Activated CD4-positive, alpha-beta T cell treated with anti-CD3 and anti-CD28 coated beads for 36 hours (primary cell): ENCODE measurements at regions of chr7 and their contacts with region 1.

Region 1: GRCh38 chr7:51123322-51124029 is 193.1 kb downstream of the COBL start:
- DNase-seq: peak; percentile 92
- ATAC-seq: peak; percentile 99
- H3K4me3 Mint-ChIP-seq: peak overlapping the region; percentile 10
- H3K27ac Mint-ChIP-seq: peak overlapping the region; percentile 88
- H3K4me1 Mint-ChIP-seq: peaks cover 40% of the 10 kb centered on the region
- H3K27me3 Mint-ChIP-seq: no peaks in the 10 kb centered on the region

Region 2: DNA sequence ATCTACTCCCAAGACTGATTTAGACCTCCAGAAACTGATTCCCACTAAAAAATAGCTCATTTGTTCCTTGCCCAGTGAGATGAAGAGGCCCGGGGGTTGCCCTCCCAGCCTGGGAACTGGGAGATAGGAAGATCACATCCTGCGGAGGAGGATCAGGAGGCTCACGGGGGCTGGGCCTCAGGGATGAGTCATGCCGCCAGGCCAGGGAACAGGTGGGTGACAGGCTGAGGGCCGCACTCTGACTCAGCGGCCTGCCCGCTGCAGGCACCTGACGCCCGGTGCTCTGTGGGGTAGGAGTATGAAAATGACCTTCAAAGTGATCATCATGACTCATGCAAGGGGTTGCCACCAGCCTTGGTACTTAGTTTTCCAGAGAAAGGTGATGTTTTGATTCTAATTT is 925.9 kb before region 1 on chr7:
- CTCF ChIA-PET with region 1: no interaction called
- POLR2A ChIA-PET with region 1: no interaction called
- intact Hi-C with region 1: loop called in 1 of 2 experiments (anchors 2 kb)
- DNase-seq: peak; percentile 91
- ATAC-seq: peak; percentile 96
- H3K4me3 Mint-ChIP-seq: peak overlapping the region; percentile 9
- H3K27ac Mint-ChIP-seq: peak overlapping the region; percentile 76
- H3K4me1 Mint-ChIP-seq: peaks cover 43% of the 10 kb centered on the region
- H3K27me3 Mint-ChIP-seq: no peaks in the 10 kb centered on the region

Region 3: DNA sequence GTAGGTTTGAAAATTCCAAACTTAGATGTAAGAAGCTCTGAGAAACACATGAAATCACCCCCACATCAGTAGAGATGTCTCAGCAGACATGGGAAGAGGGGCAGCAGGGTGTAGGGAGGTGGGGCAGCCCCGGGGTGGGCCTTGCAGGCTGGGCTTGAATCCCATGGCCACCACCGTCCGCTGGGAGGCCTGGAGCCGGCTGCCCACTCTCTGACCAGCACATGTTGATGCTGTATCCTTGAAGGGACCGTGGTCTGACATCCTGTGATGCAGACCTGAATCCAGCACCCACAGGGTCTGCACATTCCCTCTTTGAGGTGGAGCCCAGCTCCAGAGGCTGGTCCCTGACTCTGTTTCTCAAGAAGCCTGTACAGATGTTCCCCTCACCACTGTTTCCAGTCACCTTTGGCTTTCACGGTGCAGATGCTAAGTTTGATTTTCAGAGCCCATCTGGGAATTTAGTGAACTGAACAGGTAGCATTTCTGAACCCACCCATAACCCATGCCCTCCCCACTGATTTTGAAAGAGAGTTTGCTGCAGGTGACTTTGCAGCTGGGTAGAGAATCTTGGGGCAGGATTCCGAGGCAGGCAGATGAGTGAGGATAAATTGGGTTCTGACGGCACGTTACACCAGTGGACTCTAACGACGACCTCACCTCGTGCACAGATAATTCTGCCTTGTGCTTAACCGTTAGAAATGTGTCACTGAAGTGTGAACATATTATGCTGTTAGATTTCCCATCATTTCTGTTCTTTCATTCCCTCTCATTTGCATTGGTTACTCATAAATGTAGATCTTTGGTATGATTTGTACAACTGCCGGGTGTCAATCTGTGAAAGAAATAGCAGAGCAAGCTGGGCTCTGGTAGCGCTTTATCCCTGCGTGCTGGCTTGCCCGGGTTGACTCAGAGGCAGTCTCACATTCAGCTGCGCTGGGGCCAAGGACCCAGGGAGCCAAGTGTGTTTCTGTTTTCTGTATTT is 773.2 kb before region 1 on chr7:
- CTCF ChIA-PET with region 1: no interaction called
- POLR2A ChIA-PET with region 1: no interaction called
- intact Hi-C with region 1: loop called in 1 of 2 experiments (anchors 5 kb)
- DNase-seq: peak; percentile 93
- ATAC-seq: peak; percentile 71
- H3K4me3 Mint-ChIP-seq: peak overlapping the region; percentile 61
- H3K27ac Mint-ChIP-seq: peak overlapping the region; percentile 100
- H3K4me1 Mint-ChIP-seq: peaks cover 97% of the 10 kb centered on the region
- H3K27me3 Mint-ChIP-seq: no peaks in the 10 kb centered on the region

Region 4: DNA sequence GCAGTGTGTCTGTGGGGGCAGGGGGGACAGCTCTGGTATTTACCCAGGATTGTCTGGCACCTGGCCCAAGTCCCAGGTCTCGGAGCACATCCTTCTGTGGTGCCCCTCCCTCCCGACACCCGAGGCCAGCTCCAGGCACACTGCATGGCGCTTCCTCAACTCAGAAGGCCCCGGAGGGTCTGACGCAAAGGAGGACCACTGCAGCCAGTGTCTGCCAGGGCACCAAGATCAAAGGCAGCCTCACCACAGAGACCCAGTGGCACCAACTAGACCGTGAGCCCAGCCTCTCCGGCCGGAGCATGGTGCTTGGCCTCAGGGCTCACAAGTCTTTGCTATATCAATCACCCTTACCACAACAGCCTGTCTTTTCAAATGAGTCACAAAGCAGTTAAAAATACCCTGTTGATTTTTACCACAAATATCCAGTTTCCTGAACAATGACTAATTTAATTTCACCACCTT is 459.0 kb before region 1 on chr7:
- CTCF ChIA-PET with region 1: no interaction called
- POLR2A ChIA-PET with region 1: no interaction called
- intact Hi-C with region 1: loop called (anchors 1 to 5 kb)
- DNase-seq: peak; percentile 47
- ATAC-seq: peak; percentile 69
- H3K4me3 Mint-ChIP-seq: no peak overlapping the region
- H3K27ac Mint-ChIP-seq: no peak overlapping the region
- H3K4me1 Mint-ChIP-seq: peaks cover 59% of the 10 kb centered on the region
- H3K27me3 Mint-ChIP-seq: peaks cover 2% of the 10 kb centered on the region

Region 5: GRCh38 chr7:50793115-50793946 is 330.1 kb before region 1 on chr7:
- CTCF ChIA-PET with region 1: no interaction called
- POLR2A ChIA-PET with region 1: no interaction called
- intact Hi-C with region 1: loop called in 1 of 2 experiments (anchors 5 kb)
- DNase-seq: peak; percentile 51
- ATAC-seq: peak; percentile 37
- H3K4me3 Mint-ChIP-seq: peak overlapping the region; percentile 47
- H3K27ac Mint-ChIP-seq: no peak overlapping the region
- H3K4me1 Mint-ChIP-seq: peaks cover 4% of the 10 kb centered on the region
- H3K27me3 Mint-ChIP-seq: peaks cover 32% of the 10 kb centered on the region